CD8-positive, alpha-beta memory T cell (primary cell): ENCODE measurements at regions of chr1 and their contacts with region 1.

Region 1: DNA sequence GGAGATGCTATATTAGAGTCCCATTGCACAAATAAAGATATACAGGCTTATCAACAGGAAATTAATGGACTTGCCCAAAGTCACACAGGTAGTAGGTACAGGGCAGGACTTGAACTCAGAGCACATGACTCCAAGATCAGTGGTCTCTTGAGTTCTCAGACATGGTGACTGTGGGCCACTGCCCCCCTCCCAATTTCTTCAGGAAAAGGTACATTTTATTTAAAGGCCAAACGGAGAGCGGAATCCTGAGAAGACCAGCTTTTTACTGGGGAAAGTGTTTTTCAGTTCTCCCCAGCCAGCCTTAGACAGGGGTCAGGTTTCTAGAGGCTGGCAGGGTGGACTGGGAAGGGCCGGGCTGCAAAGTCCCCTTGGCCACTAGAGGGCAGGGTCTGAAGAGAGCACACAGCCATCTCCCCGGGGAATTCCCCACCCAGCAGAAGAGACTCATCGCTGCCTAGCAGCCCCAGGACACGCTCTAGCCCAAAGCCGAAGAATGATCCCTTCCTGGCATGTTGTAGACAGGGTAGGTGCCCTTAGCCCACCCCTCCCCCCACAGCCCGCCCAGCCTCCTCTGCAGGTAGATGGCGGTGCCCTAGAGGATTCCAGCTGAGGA is 29.7 kb downstream of the ACP6 start:
- DNase-seq: peak; percentile 62 to 83 (median 68)
- H3K4me3 ChIP-seq: no peak overlapping the region
- H3K4me3 Mint-ChIP-seq: peak overlapping the region in 2 of 7 donors; percentile 36 to 63
- H3K27ac ChIP-seq: no peak overlapping the region
- H3K27ac Mint-ChIP-seq: peak overlapping the region in 6 of 8 donors; percentile 43 to 88 (median 64)
- H3K4me1 ChIP-seq: peaks cover 14% of the 10 kb centered on the region
- H3K4me1 Mint-ChIP-seq: peaks cover 17 to 33% (median 23%) of the 10 kb centered on the region in 3 donors
- H3K27me3 ChIP-seq: no peaks in the 10 kb centered on the region
- H3K27me3 Mint-ChIP-seq: no peaks in the 10 kb centered on the region

Region 2: GRCh38 chr1:147618077-147618569 is 22.5 kb before region 1 on chr1:
- CTCF ChIA-PET with region 1: interaction called, 10 read pairs
- POLR2A ChIA-PET with region 1: no interaction called
- DNase-seq: peak in 2 of 5 donors; percentile 12 to 28
- H3K4me3 ChIP-seq: no peak overlapping the region
- H3K4me3 Mint-ChIP-seq: peak overlapping the region in 5 of 7 donors; percentile 17 to 51 (median 19)
- H3K27ac ChIP-seq: no peak overlapping the region
- H3K27ac Mint-ChIP-seq: peak overlapping the region in 7 of 8 donors; percentile 34 to 80 (median 61)
- H3K4me1 ChIP-seq: peaks cover 17% of the 10 kb centered on the region
- H3K4me1 Mint-ChIP-seq: peaks cover 18 to 26% (median 19%) of the 10 kb centered on the region in 3 donors
- H3K27me3 ChIP-seq: no peaks in the 10 kb centered on the region
- H3K27me3 Mint-ChIP-seq: no peaks in the 10 kb centered on the region

Region 3: DNA sequence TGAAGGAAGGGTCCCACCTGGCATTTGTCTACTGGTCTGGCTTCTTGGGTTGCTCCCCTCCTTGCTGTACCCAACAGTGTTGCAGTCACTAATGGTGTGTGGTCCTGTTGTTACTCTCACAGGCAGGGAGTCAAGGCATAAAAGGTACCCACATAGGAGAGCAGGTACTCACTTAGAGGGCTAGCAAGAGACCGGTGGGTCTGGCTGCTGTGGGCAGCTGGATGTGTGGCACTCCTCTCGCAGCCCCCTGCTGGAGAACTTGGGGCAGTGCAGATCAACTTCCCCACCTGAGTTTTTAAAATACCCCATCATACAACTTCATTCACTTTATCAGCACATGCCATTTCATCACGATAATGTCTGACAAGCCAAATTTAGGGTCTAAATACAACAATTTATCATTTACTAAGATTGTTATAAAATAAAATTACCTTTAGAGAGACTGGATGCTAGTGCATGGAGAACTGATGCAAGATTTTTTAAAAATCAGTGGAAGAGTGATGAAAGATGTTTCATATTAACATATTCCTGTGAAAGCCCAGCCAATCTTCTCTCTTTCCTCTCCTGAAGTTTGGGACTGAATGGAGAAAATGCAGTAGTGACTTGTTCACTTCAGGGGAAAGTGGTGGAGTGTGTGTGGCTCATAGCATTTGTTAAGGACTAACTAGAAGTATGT is 13.1 kb before region 1 on chr1:
- CTCF ChIA-PET with region 1: interaction called, 28 read pairs
- POLR2A ChIA-PET with region 1: no interaction called
- DNase-seq: peak; percentile 35 to 69 (median 40)
- H3K4me3 ChIP-seq: no peak overlapping the region
- H3K4me3 Mint-ChIP-seq: peak overlapping the region in 2 of 7 donors; percentile 27 to 51
- H3K27ac ChIP-seq: no peak overlapping the region
- H3K27ac Mint-ChIP-seq: peak overlapping the region in 4 of 8 donors; percentile 22 to 58 (median 42)
- H3K4me1 ChIP-seq: peaks cover 10% of the 10 kb centered on the region
- H3K4me1 Mint-ChIP-seq: peaks cover 25 to 49% (median 27%) of the 10 kb centered on the region in 3 donors
- H3K27me3 ChIP-seq: no peaks in the 10 kb centered on the region
- H3K27me3 Mint-ChIP-seq: no peaks in the 10 kb centered on the region

Region 4: DNA sequence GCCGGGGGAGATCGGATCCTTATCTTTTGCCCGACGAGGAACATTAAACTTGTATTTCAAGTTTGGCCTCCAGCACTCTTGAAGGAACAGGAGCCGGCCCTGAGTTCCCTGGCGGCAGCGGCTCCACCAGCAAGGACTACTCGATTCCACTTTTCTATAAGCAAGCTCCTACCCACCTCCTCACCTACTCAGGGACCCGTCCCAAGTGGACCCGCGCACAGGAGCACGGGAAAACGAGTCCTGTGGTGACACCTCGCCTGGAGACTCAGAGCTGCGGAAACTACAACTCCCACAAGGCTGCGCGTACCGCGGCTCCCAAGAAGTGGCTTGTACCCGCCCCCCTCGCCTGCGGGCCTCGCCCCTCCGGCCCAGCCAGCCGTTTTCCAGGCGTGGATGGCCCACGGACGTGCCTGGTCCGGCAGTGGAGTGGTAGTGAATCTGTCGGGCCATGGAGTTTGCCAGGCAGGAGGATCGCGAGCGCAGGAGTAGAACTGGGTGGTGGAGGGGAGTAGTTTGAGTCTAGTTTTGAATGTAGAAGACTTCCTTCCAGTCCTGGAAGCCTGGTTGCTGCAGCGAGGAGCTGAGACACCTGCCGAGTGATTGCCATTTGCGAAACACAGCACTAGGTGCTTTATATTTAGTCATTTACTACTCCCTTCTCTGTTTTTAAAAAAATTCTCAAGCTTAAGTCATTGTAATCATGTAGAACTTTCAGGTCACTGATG is 29.8 kb after region 1 on chr1 and contains the start of gene ACP6:
- CTCF ChIA-PET with region 1: interaction called, 10 read pairs
- POLR2A ChIA-PET with region 1: no interaction called
- DNase-seq: peak; percentile 70 to 89 (median 80)
- H3K4me3 ChIP-seq: peak within 1 kb of the TSS; percentile 94
- H3K4me3 Mint-ChIP-seq: peak within 1 kb of the TSS; percentile 94 to 98 (median 98)
- H3K27ac ChIP-seq: peak within 1 kb of the TSS; percentile 49
- H3K27ac Mint-ChIP-seq: peak within 1 kb of the TSS; percentile 60 to 96 (median 91)
- H3K4me1 ChIP-seq: peaks cover 15% of the 10 kb centered on the region
- H3K4me1 Mint-ChIP-seq: peaks cover 15 to 32% (median 23%) of the 10 kb centered on the region in 3 donors
- H3K27me3 ChIP-seq: no peaks in the 10 kb centered on the region
- H3K27me3 Mint-ChIP-seq: peaks cover 2 to 14% of the 10 kb centered on the region in 2 donors
- total RNA-seq, gene ACP6: 5.2 to 7.5 TPM